ENCODE measurements at regions of chr1 and their contacts with region 1.

Region 1: GRCh38 chr1:155244368-155245162 is 10.7 kb downstream of the ENTREP3 start:
- DNase-seq: peak; percentile 99
- ATAC-seq: peak; percentile 91
- H3K4me3 ChIP-seq: peak overlapping the region; percentile 77
- H3K27ac ChIP-seq: peak overlapping the region; percentile 54
- H3K4me1 ChIP-seq: peaks cover 27% of the 10 kb centered on the region
- H3K27me3 ChIP-seq: no peaks in the 10 kb centered on the region
- CTCF ChIP-seq: peak; percentile 23

Region 2: DNA sequence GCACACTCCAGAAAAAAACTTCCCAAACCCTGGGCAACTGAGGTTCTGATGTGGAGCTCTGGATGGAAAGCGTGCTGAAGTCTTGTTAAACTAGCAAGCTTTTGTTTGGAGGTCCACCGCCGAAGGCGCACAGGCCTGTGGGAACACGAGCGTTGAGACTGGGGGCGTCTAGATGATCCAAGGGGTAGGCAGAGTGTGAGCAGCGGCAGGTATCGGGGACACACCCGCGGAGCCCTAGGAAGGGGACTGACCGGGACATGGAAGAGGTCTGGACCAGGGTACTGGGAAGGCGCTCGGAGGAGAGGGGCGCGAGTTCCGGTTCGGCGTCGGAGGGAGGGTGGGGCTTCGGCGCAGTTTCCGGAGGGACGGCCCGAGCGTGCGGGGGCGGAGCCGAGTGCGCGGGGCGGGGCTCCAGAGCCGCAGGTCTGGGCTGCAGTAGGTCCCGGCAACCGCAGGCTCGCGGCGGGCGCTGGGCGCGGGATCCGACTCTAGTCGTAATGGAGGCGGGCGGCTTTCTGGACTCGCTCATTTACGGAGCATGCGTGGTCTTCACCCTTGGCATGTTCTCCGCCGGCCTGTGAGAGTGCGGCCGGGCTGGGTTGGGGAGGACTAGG is 109.0 kb before region 1 on chr1 and contains the start of gene SLC50A1:
- CTCF ChIA-PET with region 1: no interaction called
- POLR2A ChIA-PET with region 1: no interaction called
- intact Hi-C with region 1: no loop called
- DNase-seq: peak; percentile 97
- ATAC-seq: peak; percentile 73
- H3K4me3 ChIP-seq: peak within 1 kb of the TSS; percentile 87
- H3K27ac ChIP-seq: peak within 1 kb of the TSS; percentile 94
- H3K4me1 ChIP-seq: peaks cover 54% of the 10 kb centered on the region
- H3K27me3 ChIP-seq: no peaks in the 10 kb centered on the region
- CTCF ChIP-seq: no peak
- total RNA-seq, gene SLC50A1: 59.2 and 75.2 TPM in 2 replicates

Region 3: GRCh38 chr1:155277070-155277895 is 32.7 kb after region 1 on chr1 and contains the start of gene HCN3:
- CTCF ChIA-PET with region 1: no interaction called
- POLR2A ChIA-PET with region 1: no interaction called
- intact Hi-C with region 1: no loop called
- DNase-seq: peak; percentile 99
- ATAC-seq: peak; percentile 71
- H3K4me3 ChIP-seq: peak within 1 kb of the TSS; percentile 96
- H3K27ac ChIP-seq: no peak within 1 kb of the TSS
- H3K4me1 ChIP-seq: peaks cover 13% of the 10 kb centered on the region
- H3K27me3 ChIP-seq: no peaks in the 10 kb centered on the region
- CTCF ChIP-seq: peak; percentile 85
- total RNA-seq, gene HCN3: 1.8 and 1.9 TPM in 2 replicates

Region 4: DNA sequence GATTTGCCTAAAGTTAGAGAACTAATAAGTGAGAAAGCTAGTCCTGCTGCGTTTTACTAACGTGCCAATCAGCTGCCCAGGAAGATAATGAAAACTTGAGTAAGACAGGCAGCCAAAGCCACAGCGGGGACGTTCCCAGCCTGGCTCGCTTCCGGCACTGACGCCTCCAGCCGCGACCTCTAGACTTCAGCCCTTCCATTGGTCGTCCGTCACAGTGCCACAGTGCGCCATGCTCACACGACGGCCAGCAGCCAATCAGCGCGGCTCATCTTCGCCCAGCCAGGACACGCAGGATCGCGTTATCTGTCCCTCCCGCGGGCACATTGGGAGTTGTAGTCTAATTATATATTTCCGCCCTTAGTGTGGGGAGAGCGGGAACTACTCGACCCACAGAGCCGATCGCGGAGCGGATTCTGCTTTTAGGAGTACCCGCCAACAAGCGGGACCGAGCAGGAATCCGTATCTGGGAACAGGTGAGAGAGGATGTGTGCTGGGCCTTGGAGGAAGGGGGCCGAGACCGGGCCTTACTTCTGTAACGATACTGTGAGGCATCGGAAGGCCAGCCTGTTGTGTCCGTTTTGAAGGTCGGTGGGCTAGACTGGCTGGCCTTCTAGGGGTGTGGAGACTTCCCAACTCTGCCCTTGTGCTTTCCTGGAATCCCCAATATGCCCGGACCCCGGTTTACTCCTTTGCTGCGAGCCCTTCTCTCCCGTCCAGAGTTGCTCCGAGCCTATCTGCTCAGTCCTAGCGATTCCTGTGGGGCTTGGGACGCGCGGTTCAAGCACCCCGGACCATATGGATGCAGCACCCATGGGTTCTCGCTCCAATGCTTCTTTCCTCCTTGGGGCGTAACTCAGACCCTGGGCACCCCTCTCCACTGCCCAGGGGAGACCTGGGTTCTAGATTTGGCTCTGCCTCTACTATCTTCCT is 64.2 kb after region 1 on chr1 and contains the start of gene FDPS:
- CTCF ChIA-PET with region 1: no interaction called
- POLR2A ChIA-PET with region 1: no interaction called
- intact Hi-C with region 1: loop called (anchors 2 kb)
- DNase-seq: peak; percentile 100
- ATAC-seq: peak; percentile 97
- H3K4me3 ChIP-seq: peak within 1 kb of the TSS; percentile 92
- H3K27ac ChIP-seq: peak within 1 kb of the TSS; percentile 85
- H3K4me1 ChIP-seq: peaks cover 17% of the 10 kb centered on the region; the same call in 1 of the 2 replicates
- H3K27me3 ChIP-seq: no peaks in the 10 kb centered on the region
- CTCF ChIP-seq: no peak
- total RNA-seq, gene FDPS: 301 and 313 TPM in 2 replicates

Measured in PC-3 (cell line).